ENCODE measurements at regions of chr15 and their contacts with region 1.

Region 1: GRCh38 chr15:93485438-93486327 is 396.7 kb upstream of the RGMA start:
- DNase-seq: peak; percentile 52 to 80
- ATAC-seq: peak; percentile 67 to 77
- H3K4me3 ChIP-seq: no peak overlapping the region
- H3K27ac ChIP-seq: peak overlapping the region; percentile 80 to 87 (median 82)
- H3K4me1 ChIP-seq: peaks cover 26 to 29% of the 10 kb centered on the region in 2 donors
- H3K27me3 ChIP-seq: no peaks in the 10 kb centered on the region
- CTCF ChIP-seq: peak in 2 of 5 experiments; percentile 31 to 39
- POLR2A ChIP-seq: no peak

Region 2: GRCh38 chr15:93467327-93467726 is 18.4 kb before region 1 on chr15:
- in situ Hi-C with region 1: no loop called
- intact Hi-C with region 1: loop called (anchors 1 kb)
- DNase-seq: peak; percentile 96 to 98
- ATAC-seq: peak; percentile 99 to 100
- H3K4me3 ChIP-seq: no peak overlapping the region
- H3K27ac ChIP-seq: peak overlapping the region; percentile 47 to 72 (median 70)
- H3K4me1 ChIP-seq: peaks cover 11 to 22% of the 10 kb centered on the region in 2 donors
- H3K27me3 ChIP-seq: no peaks in the 10 kb centered on the region
- CTCF ChIP-seq: peak in 1 of 5 experiments; percentile 17
- POLR2A ChIP-seq: no peak

Region 3: GRCh38 chr15:93664213-93664956 is 178.7 kb after region 1 on chr15:
- in situ Hi-C with region 1: no loop called
- intact Hi-C with region 1: no loop called
- DNase-seq: no peak
- ATAC-seq: no peak
- H3K4me3 ChIP-seq: no peak overlapping the region
- H3K27ac ChIP-seq: peak overlapping the region in 1 of 4 donors; percentile 32
- H3K4me1 ChIP-seq: no peaks in the 10 kb centered on the region
- H3K27me3 ChIP-seq: no peaks in the 10 kb centered on the region
- CTCF ChIP-seq: no peak
- POLR2A ChIP-seq: no peak

Region 4: DNA sequence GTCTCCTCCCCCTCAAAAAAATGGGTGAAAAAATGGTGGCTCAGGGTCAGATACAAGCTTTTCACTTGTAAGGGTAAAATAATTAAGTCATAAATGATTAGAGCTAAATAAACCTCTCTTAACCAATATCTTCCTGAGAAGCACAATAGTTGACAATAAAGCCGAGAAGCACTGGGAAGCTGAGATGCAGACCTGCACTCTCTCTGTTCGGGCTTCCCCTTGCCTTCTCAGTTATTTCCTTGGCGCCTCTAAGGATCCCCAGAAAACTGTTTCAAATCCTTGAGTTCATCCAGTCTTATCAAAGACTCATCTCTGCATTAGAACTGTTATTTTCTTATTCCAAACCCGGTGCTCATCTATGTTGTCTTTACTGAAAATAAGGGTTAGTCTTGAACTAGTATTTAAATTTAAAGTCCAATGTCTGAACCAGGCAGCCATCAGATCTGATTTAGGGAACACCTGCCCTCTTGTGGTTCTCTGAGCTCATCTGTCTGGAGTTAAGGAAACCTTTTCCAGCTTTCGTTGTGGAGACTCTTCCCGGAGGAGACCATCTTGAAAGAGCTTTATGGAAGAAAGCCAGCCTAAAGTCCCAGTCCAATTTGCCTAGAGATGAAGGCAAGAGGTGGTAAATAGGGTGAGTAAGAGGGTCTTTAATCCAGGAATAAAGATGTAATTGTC is 489.3 kb after region 1 on chr15:
- in situ Hi-C with region 1: no loop called
- intact Hi-C with region 1: loop called (anchors 10 kb)
- DNase-seq: peak in 1 of 2 donors; percentile 12
- ATAC-seq: peak; percentile 36 to 68
- H3K4me3 ChIP-seq: no peak overlapping the region
- H3K27ac ChIP-seq: no peak overlapping the region
- H3K4me1 ChIP-seq: peaks cover 0 to 4% of the 10 kb centered on the region in 2 donors
- H3K27me3 ChIP-seq: no peaks in the 10 kb centered on the region
- CTCF ChIP-seq: peak in 4 of 5 experiments; percentile 7 to 37 (median 28)
- POLR2A ChIP-seq: no peak

Measured in gastrocnemius medialis (tissue), 4 donors.